ENCODE measurements at regions of chr2 and their contacts with region 1.

Region 1: GRCh38 chr2:110755491-110756078 is 23.2 kb downstream of the ACOXL start:
- DNase-seq: no peak
- ATAC-seq: no peak
- H3K4me3 ChIP-seq: no peak overlapping the region
- H3K27ac ChIP-seq: no peak overlapping the region
- H3K4me1 ChIP-seq: no peaks in the 10 kb centered on the region
- H3K27me3 ChIP-seq: peaks cover 0 to 5% (median 0%) of the 10 kb centered on the region in 7 donors
- CTCF ChIP-seq: peak; percentile 29 to 71 (median 64)

Region 2: GRCh38 chr2:110677530-110678456 is 77.8 kb before region 1 on chr2 and contains the start of gene BUB1:
- intact Hi-C with region 1: loop called in 1 of 10 experiments (anchors 10 kb)
- DNase-seq: peak; percentile 97
- ATAC-seq: peak; percentile 98 to 100 (median 100)
- H3K4me3 ChIP-seq: peak within 1 kb of the TSS; percentile 51 to 98 (median 69)
- H3K27ac ChIP-seq: peak within 1 kb of the TSS; percentile 54 to 96 (median 86)
- H3K4me1 ChIP-seq: peaks cover 2 to 42% (median 22%) of the 10 kb centered on the region in 9 donors
- H3K27me3 ChIP-seq: no peaks in the 10 kb centered on the region
- CTCF ChIP-seq: no peak
- total RNA-seq, gene BUB1: 0.12 to 4.5 (median 0.77) TPM

Measured in heart right ventricle (tissue), 16 donors.